ENCODE measurements at regions of chr17 and their contacts with region 1.

Region 1: DNA sequence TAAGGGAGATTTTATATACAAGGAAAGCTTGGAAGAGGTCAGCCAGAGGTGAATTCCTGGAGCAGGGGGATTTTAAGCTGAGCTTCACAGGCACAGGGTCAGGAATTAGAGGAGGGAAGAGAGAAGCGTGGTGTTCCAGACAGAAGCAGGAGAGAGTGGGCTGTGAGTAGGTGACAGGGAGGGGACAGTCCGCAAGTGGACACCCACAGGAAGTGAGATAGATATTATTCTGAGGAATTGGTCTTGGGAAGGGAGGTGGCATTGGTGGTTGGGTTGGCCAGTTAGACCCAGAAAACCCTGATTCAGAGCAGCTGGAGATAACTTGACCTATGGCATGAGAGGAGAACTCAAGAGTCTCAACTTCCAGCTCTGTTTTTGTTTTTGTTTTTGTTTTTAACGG is 14.7 kb downstream of the PHB1 start:
- DNase-seq: no peak
- H3K4me3 Mint-ChIP-seq: no peak overlapping the region
- H3K27ac Mint-ChIP-seq: no peak overlapping the region
- H3K4me1 Mint-ChIP-seq: peaks cover 24% of the 10 kb centered on the region
- H3K27me3 Mint-ChIP-seq: peaks cover 2% of the 10 kb centered on the region

Region 2: DNA sequence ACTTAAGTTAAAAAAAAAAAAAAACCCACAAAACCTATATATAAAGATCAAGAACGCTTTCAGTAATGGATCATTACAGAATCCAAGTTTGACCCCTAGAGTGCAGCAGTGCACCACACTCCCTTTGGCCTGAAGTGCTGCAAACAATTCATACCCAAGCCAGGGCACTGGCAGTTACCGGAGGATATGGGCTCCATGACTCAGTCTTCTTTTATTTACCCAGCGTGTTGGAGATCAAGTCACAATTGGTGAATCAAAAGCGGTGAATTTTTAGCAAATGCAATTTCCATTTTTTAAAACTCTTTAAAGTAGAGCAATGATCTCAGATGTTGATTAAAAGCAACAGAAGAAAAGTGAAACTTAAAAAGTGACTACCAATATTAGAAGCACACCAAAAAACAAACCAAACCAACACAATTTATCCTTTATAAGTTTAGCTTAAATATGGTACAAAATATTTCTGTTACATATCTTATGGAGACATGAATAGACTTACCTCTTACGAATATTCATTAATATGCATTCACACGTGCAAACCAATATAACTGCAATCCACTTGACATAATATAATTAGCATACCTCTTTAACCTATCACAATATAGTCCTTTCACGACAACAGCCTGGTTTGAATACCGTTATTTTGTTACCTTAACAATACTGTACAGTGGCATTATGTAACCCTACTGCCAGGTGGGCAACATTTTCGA is 84.3 kb before region 1 on chr17:
- CTCF ChIA-PET with region 1: interaction called, 11 read pairs
- POLR2A ChIA-PET with region 1: no interaction called
- DNase-seq: peak; percentile 86
- H3K4me3 Mint-ChIP-seq: peak overlapping the region; percentile 48
- H3K27ac Mint-ChIP-seq: peak overlapping the region; percentile 81
- H3K4me1 Mint-ChIP-seq: peaks cover 30% of the 10 kb centered on the region
- H3K27me3 Mint-ChIP-seq: no peaks in the 10 kb centered on the region